ENCODE measurements at regions of chr22 and their contacts with region 1.

Region 1: DNA sequence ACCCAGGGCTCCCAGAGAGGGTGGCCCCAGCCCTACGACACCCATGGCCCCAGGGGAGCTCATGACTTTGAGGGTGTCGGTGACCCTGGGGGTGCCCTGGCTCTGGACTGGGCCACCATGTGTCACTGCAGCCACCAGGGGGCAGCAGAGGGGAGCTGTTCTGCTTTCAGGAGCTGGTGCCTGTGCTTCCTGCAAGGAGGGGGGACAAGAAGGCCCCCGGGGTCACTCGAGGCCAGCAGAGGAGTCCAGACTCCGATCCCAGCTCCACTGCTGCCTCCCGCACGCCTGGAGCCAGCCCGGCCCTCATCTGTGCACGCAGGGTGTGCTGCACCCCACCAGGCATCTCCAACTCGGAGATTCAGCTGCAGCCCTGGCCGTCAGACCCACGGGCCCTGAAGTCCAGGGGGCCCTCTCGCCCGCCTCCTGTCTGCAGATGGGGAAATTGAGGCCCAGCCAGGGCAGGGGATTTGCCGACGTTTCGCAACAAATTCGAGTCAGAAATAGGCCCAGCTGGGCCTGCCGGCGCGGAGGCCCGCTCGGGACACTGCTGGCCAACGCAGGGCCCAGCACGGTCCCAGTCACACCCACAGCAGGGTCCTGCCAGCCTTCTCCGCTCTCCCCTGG is 29.5 kb upstream of the WNT7B start:
- DNase-seq: peak; percentile 73 to 95 (median 88)
- ATAC-seq: peak; percentile 92
- H3K4me3 ChIP-seq: no peak overlapping the region
- H3K4me3 Mint-ChIP-seq: no peak overlapping the region
- H3K27ac ChIP-seq: no peak overlapping the region
- H3K27ac Mint-ChIP-seq: no peak overlapping the region
- H3K4me1 ChIP-seq: peaks cover 17% of the 10 kb centered on the region
- H3K4me1 Mint-ChIP-seq: peaks cover 10% of the 10 kb centered on the region
- H3K27me3 ChIP-seq: no peaks in the 10 kb centered on the region
- H3K27me3 Mint-ChIP-seq: no peaks in the 10 kb centered on the region
- CTCF ChIP-seq: peak; percentile 94

Region 2: GRCh38 chr22:45742866-45743450 is 263.5 kb before region 1 on chr22:
- CTCF ChIA-PET with region 1: no interaction called
- POLR2A ChIA-PET with region 1: no interaction called
- intact Hi-C with region 1: no loop called
- DNase-seq: no peak
- ATAC-seq: no peak
- H3K4me3 ChIP-seq: no peak overlapping the region
- H3K4me3 Mint-ChIP-seq: no peak overlapping the region
- H3K27ac ChIP-seq: no peak overlapping the region
- H3K27ac Mint-ChIP-seq: no peak overlapping the region
- H3K4me1 ChIP-seq: no peaks in the 10 kb centered on the region
- H3K4me1 Mint-ChIP-seq: peaks cover 2% of the 10 kb centered on the region
- H3K27me3 ChIP-seq: no peaks in the 10 kb centered on the region
- H3K27me3 Mint-ChIP-seq: no peaks in the 10 kb centered on the region
- CTCF ChIP-seq: no peak

Region 3: DNA sequence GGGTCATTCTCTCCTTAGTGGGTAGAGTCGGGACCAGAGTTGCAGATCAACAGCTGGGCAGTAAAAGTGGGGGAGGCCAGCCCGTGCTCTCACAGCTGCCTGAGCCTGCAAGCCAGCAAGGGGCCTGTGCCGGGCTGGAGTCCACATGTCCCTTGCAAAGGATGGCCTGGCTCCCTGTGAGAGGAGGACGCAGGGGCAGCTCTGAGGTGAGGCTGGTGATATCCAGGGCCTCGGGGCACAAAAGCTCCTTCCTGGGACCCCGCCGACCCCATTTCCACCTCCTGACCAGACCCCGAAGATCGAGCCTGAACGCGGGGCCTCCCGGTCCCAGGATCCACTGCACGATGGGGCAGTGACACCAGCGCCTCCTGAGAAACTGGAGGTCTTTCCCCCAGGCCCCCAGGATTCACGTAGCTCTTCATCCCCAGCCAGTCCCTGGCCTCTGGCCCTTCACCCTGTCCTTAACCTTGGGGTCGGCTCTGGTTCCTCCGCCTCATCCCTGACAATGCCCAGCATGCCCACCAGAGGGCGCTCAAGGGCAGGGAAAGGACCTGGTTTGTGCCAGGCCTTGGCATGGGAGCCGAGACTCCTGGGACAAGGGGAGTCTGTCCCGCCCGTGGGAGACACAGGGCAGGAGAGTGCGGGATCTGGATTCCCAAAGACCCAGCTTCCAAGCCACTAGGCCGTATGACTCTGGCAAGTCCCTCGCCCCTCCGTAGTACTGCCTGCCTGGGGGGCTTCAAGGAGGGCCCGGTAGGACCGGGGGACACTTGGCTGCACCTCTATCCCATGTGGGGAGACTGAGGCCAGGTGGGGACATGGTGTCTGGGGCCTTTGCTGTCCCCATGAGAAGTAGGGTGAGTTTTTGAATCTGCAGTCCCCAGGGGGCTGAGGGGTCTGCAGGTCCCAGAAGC is 11.7 kb before region 1 on chr22:
- CTCF ChIA-PET with region 1: interaction called, 89 read pairs
- POLR2A ChIA-PET with region 1: interaction called, 4 read pairs
- intact Hi-C with region 1: no loop called
- DNase-seq: peak; percentile 63 to 92 (median 75)
- ATAC-seq: peak; percentile 85
- H3K4me3 ChIP-seq: no peak overlapping the region
- H3K4me3 Mint-ChIP-seq: no peak overlapping the region
- H3K27ac ChIP-seq: peak overlapping the region in 1 of 2 experiments; percentile 59
- H3K27ac Mint-ChIP-seq: no peak overlapping the region
- H3K4me1 ChIP-seq: peaks cover 7% of the 10 kb centered on the region
- H3K4me1 Mint-ChIP-seq: peaks cover 7% of the 10 kb centered on the region
- H3K27me3 ChIP-seq: no peaks in the 10 kb centered on the region
- H3K27me3 Mint-ChIP-seq: no peaks in the 10 kb centered on the region
- CTCF ChIP-seq: peak; percentile 94

Region 4: GRCh38 chr22:46071451-46072109 is 65.1 kb after region 1 on chr22:
- CTCF ChIA-PET with region 1: interaction called, 17 read pairs
- POLR2A ChIA-PET with region 1: no interaction called
- intact Hi-C with region 1: no loop called
- DNase-seq: peak in 7 of 9 experiments; percentile 31 to 62 (median 51)
- ATAC-seq: peak; percentile 21
- H3K4me3 ChIP-seq: peak overlapping the region; percentile 32 to 50
- H3K4me3 Mint-ChIP-seq: peak overlapping the region; percentile 82
- H3K27ac ChIP-seq: no peak overlapping the region
- H3K27ac Mint-ChIP-seq: peak overlapping the region; percentile 67
- H3K4me1 ChIP-seq: peaks cover 34% of the 10 kb centered on the region
- H3K4me1 Mint-ChIP-seq: peaks cover 42% of the 10 kb centered on the region
- H3K27me3 ChIP-seq: no peaks in the 10 kb centered on the region
- H3K27me3 Mint-ChIP-seq: no peaks in the 10 kb centered on the region
- CTCF ChIP-seq: no peak

Region 5: DNA sequence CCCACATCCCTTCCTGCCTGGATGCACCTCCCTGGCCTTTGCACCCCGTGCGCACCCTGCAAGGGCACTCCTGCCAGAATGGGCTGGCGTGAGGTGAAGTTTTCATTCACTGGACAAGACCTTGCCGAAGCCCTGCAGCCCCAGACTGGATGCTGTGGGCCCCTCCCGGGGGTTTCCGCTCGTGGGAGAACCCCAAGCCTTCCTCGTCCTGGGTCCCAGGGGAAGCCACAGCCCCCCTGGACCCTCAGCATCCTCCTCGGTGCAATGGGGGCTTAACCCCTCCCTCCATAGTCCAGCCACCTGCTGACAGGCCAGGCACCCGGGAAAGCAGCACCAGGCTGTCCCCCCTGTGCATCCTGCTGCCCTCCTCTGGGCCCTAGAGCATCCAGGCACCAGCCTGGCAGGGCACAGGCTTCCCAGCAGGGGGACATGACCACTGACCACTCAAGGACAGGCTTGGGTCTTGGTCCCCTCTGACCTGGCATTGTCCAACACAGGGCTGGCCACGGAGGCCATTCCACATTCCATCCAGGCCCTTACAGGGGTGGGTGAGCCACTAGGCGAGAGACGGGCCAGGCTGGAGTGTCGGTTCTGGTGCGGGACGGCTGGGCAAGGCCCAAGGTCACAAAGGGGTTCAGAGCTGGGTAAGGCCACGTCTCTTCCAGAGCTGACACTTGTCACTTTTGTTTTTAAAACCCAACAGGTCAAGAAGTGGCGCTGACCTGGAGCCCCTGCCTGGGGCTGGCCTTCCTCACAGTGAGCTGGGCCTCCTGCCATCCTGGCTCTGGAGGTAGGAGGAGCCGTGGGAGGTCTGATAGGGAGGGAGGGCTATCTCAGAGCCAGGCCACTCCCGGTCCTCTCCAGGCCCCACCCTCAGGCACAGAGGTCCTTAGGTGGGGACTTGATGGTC is 102.3 kb after region 1 on chr22:
- CTCF ChIA-PET with region 1: interaction called, 206 read pairs
- POLR2A ChIA-PET with region 1: no interaction called
- intact Hi-C with region 1: no loop called
- DNase-seq: no peak
- ATAC-seq: no peak
- H3K4me3 ChIP-seq: no peak overlapping the region
- H3K4me3 Mint-ChIP-seq: no peak overlapping the region
- H3K27ac ChIP-seq: no peak overlapping the region
- H3K27ac Mint-ChIP-seq: no peak overlapping the region
- H3K4me1 ChIP-seq: no peaks in the 10 kb centered on the region
- H3K4me1 Mint-ChIP-seq: no peaks in the 10 kb centered on the region
- H3K27me3 ChIP-seq: no peaks in the 10 kb centered on the region
- H3K27me3 Mint-ChIP-seq: no peaks in the 10 kb centered on the region
- CTCF ChIP-seq: no peak

Region 6: GRCh38 chr22:46309526-46310085 is 303.1 kb after region 1 on chr22:
- CTCF ChIA-PET with region 1: interaction called, 15 read pairs
- POLR2A ChIA-PET with region 1: no interaction called
- intact Hi-C with region 1: loop called in 1 of 2 experiments (anchors 5 kb)
- DNase-seq: no peak
- ATAC-seq: no peak
- H3K4me3 ChIP-seq: no peak overlapping the region
- H3K4me3 Mint-ChIP-seq: no peak overlapping the region
- H3K27ac ChIP-seq: no peak overlapping the region
- H3K27ac Mint-ChIP-seq: no peak overlapping the region
- H3K4me1 ChIP-seq: no peaks in the 10 kb centered on the region
- H3K4me1 Mint-ChIP-seq: no peaks in the 10 kb centered on the region
- H3K27me3 ChIP-seq: no peaks in the 10 kb centered on the region
- H3K27me3 Mint-ChIP-seq: no peaks in the 10 kb centered on the region
- CTCF ChIP-seq: no peak

Measured in CD8-positive, alpha-beta T cell (primary cell).